ENCODE measurements at regions of chr11 and their contacts with region 1.

Region 1: GRCh38 chr11:44950625-44951476 is at the start of gene TP53I11:
- DNase-seq: peak; percentile 85 to 91
- ATAC-seq: peak; percentile 74 to 91 (median 86)
- H3K4me3 ChIP-seq: peak within 1 kb of the TSS; percentile 55 to 98 (median 83)
- H3K27ac ChIP-seq: peak within 1 kb of the TSS; percentile 44 to 95 (median 90)
- H3K4me1 ChIP-seq: peaks cover 7 to 82% (median 53%) of the 10 kb centered on the region in 9 donors
- H3K27me3 ChIP-seq: no peaks in the 10 kb centered on the region
- CTCF ChIP-seq: peak; percentile 73 to 96 (median 86)
- total RNA-seq, gene TP53I11: 22.8 to 89.4 (median 32.7) TPM

Region 2: DNA sequence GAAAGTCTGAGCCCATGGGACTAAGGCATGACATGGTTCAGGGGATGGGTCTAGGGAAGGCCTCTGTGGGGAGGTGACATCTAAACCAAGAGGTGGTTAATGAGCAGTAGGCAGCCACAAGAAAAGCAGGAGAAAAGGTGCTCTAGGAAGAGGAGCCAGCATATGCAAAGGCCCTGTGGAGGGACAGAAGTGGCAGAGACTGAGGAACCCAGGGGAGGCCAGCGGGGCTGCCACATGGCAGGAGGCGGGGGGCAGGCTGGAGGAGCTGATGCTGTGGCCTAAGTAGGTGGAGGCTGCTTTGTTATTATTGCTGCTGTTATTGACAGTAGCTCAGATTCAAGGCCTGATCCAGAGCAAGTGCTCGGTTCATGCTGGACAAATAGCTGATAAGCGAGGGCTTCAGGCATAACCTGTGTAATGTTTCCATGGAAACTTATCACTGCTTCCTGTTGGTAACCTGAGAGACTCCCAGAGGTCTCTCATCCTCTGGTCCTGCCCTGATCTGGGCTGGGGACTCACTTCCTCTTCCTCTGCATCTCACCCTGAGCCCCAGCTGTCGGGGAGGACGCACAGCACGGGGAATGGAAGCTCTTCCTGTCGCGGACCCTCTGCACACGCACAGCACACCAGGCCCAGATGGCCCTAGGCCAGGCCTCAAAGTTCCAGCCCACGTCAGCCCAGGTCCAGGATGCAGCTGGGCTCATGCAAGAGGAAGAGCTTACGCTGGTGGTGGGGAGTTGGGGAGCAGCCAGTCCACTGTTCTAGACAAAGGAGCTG is 75.1 kb after region 1 on chr11:
- intact Hi-C with region 1: loop called in 6 of 10 experiments (anchors 5 to 10 kb)
- DNase-seq: peak; percentile 68 to 90
- ATAC-seq: peak; percentile 64 to 93 (median 86)
- H3K4me3 ChIP-seq: no peak overlapping the region
- H3K27ac ChIP-seq: peak overlapping the region; percentile 11 to 86 (median 74)
- H3K4me1 ChIP-seq: peaks cover 10 to 83% (median 50%) of the 10 kb centered on the region in 9 donors
- H3K27me3 ChIP-seq: no peaks in the 10 kb centered on the region
- CTCF ChIP-seq: no peak

Region 3: GRCh38 chr11:45045683-45046471 is 95.0 kb after region 1 on chr11:
- intact Hi-C with region 1: loop called in 1 of 10 experiments (anchors 5 kb)
- DNase-seq: peak; percentile 45 to 59
- ATAC-seq: peak; percentile 28 to 64 (median 54)
- H3K4me3 ChIP-seq: no peak overlapping the region
- H3K27ac ChIP-seq: peak overlapping the region in 9 of 10 donors; percentile 40 to 90 (median 75)
- H3K4me1 ChIP-seq: peaks cover 19 to 64% (median 51%) of the 10 kb centered on the region in 9 donors
- H3K27me3 ChIP-seq: no peaks in the 10 kb centered on the region
- CTCF ChIP-seq: peak in 3 of 9 donors; percentile 8 to 17 (median 11)

Region 4: DNA sequence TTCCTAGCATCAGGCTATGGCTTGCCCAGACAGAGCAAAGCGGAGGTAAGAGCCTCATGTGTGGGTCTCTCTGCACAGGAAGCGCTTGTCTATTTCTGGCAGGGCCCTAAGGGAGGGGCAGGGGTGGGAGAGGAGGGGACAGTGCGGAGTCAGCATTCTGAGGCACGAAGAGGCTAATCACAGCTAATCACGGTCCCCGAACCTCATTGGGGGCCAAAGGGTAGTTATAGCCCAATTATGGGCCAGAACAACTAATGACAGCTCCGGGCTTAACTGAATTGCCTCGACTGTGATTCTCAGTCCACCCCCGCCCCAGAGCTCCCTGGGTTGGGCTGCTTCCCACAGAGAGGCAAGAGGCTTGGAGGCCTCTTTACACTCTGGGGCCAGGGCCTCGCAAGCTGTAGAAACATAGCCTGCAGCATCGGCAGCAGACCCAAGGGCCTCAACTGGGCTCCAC is 122.9 kb after region 1 on chr11:
- intact Hi-C with region 1: no loop called
- DNase-seq: no peak
- ATAC-seq: peak in 7 of 8 donors; percentile 32 to 71 (median 52)
- H3K4me3 ChIP-seq: no peak overlapping the region
- H3K27ac ChIP-seq: peak overlapping the region in 2 of 10 donors; percentile 24 to 26
- H3K4me1 ChIP-seq: peaks cover 0 to 31% (median 8%) of the 10 kb centered on the region in 9 donors
- H3K27me3 ChIP-seq: no peaks in the 10 kb centered on the region
- CTCF ChIP-seq: no peak